CD8-positive, alpha-beta T cell (primary cell): ENCODE measurements at regions of chr6 and their contacts with region 1.

Region 1: DNA sequence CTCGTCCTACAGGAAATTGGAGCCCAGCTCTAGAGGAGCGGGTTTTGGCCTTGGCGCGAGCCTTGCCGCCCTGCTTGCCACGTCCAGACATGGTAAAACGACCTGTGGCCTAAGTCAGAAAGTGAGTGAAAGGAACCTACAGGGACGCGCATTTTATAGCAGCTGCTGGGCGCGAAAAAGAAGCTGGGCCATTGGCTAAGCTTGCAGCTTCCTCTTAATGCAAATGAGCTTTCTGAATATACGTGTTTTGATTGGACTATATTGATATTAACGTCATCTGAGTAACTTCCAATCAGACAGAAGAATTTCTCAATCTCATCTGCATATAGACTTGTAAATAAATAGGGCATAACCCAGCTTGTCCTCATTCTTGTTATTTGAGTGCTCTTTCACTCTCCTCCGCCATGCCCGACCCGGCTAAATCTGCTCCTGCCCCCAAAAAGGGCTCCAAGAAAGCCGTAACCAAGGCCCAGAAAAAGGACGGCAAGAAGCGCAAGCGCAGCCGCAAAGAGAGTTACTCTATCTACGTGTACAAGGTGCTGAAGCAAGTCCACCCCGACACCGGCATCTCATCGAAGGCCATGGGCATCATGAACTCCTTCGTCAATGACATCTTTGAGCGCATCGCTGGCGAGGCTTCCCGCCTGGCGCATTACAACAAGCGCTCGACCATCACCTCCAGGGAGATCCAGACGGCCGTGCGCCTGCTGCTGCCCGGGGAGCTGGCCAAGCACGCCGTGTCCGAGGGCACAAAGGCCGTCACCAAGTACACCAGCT is 18.9 kb downstream of the OR2B2 start:
- DNase-seq: peak; percentile 79 to 96 (median 85)
- ATAC-seq: peak; percentile 72
- H3K4me3 ChIP-seq: peak overlapping the region; percentile 66 to 81
- H3K4me3 Mint-ChIP-seq: no peak overlapping the region
- H3K27ac ChIP-seq: peak overlapping the region; percentile 70 to 88
- H3K27ac Mint-ChIP-seq: no peak overlapping the region
- H3K4me1 ChIP-seq: peaks cover 18% of the 10 kb centered on the region
- H3K4me1 Mint-ChIP-seq: peaks cover 29% of the 10 kb centered on the region
- H3K27me3 ChIP-seq: no peaks in the 10 kb centered on the region
- H3K27me3 Mint-ChIP-seq: no peaks in the 10 kb centered on the region
- CTCF ChIP-seq: no peak

Region 2: GRCh38 chr6:26045065-26045927 is 1848.0 kb before region 1 on chr6:
- CTCF ChIA-PET with region 1: no interaction called
- POLR2A ChIA-PET with region 1: interaction called, 6 read pairs
- intact Hi-C with region 1: loop called in 1 of 2 experiments (anchors 5 kb)
- DNase-seq: peak; percentile 54 to 93 (median 79)
- ATAC-seq: peak; percentile 59
- H3K4me3 ChIP-seq: peak overlapping the region; percentile 67 to 76
- H3K4me3 Mint-ChIP-seq: peak overlapping the region; percentile 89
- H3K27ac ChIP-seq: peak overlapping the region; percentile 73 to 81
- H3K27ac Mint-ChIP-seq: peak overlapping the region; percentile 98
- H3K4me1 ChIP-seq: peaks cover 7% of the 10 kb centered on the region
- H3K4me1 Mint-ChIP-seq: peaks cover 14% of the 10 kb centered on the region
- H3K27me3 ChIP-seq: no peaks in the 10 kb centered on the region
- H3K27me3 Mint-ChIP-seq: no peaks in the 10 kb centered on the region
- CTCF ChIP-seq: no peak

Region 3: DNA sequence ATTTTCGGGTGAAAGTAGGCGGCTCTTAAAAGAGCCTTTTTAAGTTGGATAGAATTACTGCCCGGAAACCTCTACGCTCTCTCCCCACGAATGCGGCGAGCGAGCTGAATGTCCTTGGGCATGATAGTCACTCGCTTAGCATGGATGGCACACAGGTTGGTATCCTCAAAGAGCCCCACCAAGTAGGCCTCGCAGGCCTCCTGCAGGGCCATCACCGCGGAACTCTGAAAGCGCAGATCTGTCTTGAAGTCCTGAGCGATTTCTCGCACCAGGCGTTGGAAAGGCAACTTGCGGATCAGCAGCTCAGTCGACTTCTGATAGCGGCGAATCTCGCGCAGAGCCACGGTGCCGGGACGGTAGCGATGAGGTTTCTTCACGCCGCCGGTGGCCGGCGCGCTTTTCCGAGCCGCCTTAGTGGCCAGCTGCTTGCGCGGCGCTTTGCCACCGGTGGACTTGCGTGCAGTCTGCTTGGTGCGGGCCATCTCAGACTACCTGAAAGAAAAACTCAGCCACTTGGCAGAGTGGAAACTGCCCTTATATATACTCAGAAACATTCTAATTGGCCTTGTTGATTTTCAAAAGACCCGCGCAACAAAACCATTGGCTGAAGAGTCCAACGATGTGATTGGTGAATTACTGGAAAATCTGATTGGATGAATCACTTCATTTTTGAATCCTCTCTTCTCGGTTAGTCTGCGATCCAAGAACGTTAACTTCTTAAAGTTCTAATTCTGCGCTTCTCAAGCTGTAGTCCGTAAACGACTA is 1622.2 kb before region 1 on chr6:
- CTCF ChIA-PET with region 1: no interaction called
- POLR2A ChIA-PET with region 1: interaction called, 3 read pairs
- intact Hi-C with region 1: loop called in 1 of 2 experiments (anchors 5 kb)
- DNase-seq: peak; percentile 68 to 91 (median 80)
- ATAC-seq: peak; percentile 22
- H3K4me3 ChIP-seq: peak overlapping the region; percentile 65 to 67
- H3K4me3 Mint-ChIP-seq: no peak overlapping the region
- H3K27ac ChIP-seq: peak overlapping the region; percentile 73 to 92
- H3K27ac Mint-ChIP-seq: peak overlapping the region; percentile 73
- H3K4me1 ChIP-seq: peaks cover 22% of the 10 kb centered on the region
- H3K4me1 Mint-ChIP-seq: peaks cover 13% of the 10 kb centered on the region
- H3K27me3 ChIP-seq: no peaks in the 10 kb centered on the region
- H3K27me3 Mint-ChIP-seq: no peaks in the 10 kb centered on the region
- CTCF ChIP-seq: no peak

Region 4: DNA sequence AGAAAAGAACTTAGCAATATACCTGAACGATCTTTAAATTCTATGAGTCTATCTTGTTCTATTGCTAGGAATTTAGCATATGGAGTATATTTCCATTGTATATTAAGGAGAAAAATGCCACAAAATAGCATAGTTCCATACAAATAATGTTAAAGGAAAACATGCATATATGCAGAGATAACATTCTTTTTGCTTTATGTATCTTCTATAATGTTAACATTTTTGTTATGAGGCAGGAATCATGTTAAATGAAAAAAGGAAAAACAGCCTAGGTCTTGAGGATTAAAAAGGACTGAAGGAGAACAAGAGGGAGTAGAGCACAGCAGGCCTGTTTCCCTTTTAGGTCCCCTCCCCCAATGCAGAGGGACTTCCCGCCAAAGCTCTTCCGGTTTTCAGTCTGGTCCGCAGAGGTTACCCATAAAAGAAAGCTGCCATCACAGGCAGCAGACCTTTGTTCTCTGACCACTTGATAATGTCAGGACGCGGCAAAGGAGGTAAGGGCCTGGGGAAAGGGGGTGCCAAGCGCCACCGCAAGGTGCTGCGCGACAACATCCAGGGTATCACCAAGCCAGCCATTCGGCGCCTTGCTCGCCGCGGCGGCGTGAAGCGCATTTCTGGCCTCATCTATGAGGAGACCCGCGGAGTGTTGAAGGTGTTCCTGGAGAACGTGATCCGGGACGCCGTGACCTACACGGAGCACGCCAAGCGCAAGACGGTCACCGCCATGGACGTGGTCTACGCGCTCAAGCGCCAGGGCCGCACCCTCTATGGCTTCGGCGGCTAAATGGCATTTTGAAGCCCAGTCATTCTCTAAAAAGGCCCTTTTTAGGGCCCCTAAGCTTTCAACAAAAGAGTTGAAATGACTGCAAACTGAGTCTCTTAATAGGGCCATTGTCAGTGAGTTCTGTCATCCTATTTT is 754.2 kb before region 1 on chr6:
- CTCF ChIA-PET with region 1: interaction called, 4 read pairs
- POLR2A ChIA-PET with region 1: interaction called, 65 read pairs
- intact Hi-C with region 1: no loop called
- DNase-seq: peak in 8 of 9 experiments; percentile 38 to 91 (median 60)
- ATAC-seq: peak; percentile 77
- H3K4me3 ChIP-seq: peak overlapping the region; percentile 77 to 85
- H3K4me3 Mint-ChIP-seq: peak overlapping the region; percentile 96
- H3K27ac ChIP-seq: peak overlapping the region; percentile 82 to 93
- H3K27ac Mint-ChIP-seq: peak overlapping the region; percentile 99
- H3K4me1 ChIP-seq: peaks cover 33% of the 10 kb centered on the region
- H3K4me1 Mint-ChIP-seq: peaks cover 50% of the 10 kb centered on the region
- H3K27me3 ChIP-seq: no peaks in the 10 kb centered on the region
- H3K27me3 Mint-ChIP-seq: no peaks in the 10 kb centered on the region
- CTCF ChIP-seq: no peak

Region 5: GRCh38 chr6:27312146-27312949 is 580.9 kb before region 1 on chr6 and contains the start of gene POM121L2:
- CTCF ChIA-PET with region 1: interaction called, 13 read pairs
- POLR2A ChIA-PET with region 1: no interaction called
- intact Hi-C with region 1: loop called (anchors 5 kb)
- DNase-seq: peak; percentile 28 to 79 (median 52)
- ATAC-seq: peak; percentile 65
- H3K4me3 ChIP-seq: peak within 1 kb of the TSS; percentile 71 to 80
- H3K4me3 Mint-ChIP-seq: peak within 1 kb of the TSS; percentile 81
- H3K27ac ChIP-seq: no peak within 1 kb of the TSS
- H3K27ac Mint-ChIP-seq: no peak within 1 kb of the TSS
- H3K4me1 ChIP-seq: peaks cover 12% of the 10 kb centered on the region
- H3K4me1 Mint-ChIP-seq: peaks cover 10% of the 10 kb centered on the region
- H3K27me3 ChIP-seq: peaks cover 10 to 12% of the 10 kb centered on the region in 2 experiments
- H3K27me3 Mint-ChIP-seq: peaks cover 72% of the 10 kb centered on the region
- CTCF ChIP-seq: peak; percentile 79
- total RNA-seq, gene POM121L2: not detected

Region 6: DNA sequence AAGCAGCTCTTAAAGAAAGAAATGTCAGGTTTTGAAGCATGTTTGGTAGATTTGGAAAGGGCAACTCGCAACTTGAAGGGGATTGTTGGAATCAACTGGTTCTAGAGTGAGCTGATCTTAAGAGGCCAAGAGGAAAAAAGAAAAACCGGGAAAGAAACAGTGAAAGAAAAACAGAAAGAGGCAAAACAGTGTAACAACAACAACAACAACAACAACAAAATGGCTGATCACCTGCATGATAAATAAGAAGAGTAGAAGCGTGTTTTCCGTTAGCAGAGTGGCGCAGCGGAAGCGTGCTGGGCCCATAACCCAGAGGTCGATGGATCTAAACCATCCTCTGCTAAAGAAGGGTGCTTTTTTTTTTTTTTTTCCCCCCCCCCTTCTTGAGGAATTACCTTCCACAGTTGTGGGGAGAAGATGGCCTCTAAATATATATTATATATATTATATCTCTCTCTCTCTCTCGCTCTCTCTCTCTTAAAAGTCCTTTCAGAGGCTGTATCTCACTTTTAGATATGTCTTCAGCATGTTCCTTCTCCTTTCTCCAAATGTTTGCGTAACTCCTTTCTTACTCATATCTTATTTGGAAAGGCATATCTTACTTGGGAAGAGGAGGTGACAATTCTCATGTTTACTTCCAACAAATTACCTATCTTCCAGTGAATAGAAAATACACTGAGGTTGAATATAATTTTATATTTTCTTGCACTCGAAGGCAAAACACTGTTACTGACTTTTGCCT is 115.5 kb before region 1 on chr6:
- CTCF ChIA-PET with region 1: interaction called, 176 read pairs
- POLR2A ChIA-PET with region 1: interaction called, 55 read pairs
- intact Hi-C with region 1: loop called (anchors 1 kb)
- DNase-seq: no peak
- ATAC-seq: no peak
- H3K4me3 ChIP-seq: no peak overlapping the region
- H3K4me3 Mint-ChIP-seq: no peak overlapping the region
- H3K27ac ChIP-seq: no peak overlapping the region
- H3K27ac Mint-ChIP-seq: no peak overlapping the region
- H3K4me1 ChIP-seq: peaks cover 1% of the 10 kb centered on the region
- H3K4me1 Mint-ChIP-seq: peaks cover 2% of the 10 kb centered on the region
- H3K27me3 ChIP-seq: no peaks in the 10 kb centered on the region
- H3K27me3 Mint-ChIP-seq: peaks cover 11% of the 10 kb centered on the region
- CTCF ChIP-seq: no peak

Region 7: DNA sequence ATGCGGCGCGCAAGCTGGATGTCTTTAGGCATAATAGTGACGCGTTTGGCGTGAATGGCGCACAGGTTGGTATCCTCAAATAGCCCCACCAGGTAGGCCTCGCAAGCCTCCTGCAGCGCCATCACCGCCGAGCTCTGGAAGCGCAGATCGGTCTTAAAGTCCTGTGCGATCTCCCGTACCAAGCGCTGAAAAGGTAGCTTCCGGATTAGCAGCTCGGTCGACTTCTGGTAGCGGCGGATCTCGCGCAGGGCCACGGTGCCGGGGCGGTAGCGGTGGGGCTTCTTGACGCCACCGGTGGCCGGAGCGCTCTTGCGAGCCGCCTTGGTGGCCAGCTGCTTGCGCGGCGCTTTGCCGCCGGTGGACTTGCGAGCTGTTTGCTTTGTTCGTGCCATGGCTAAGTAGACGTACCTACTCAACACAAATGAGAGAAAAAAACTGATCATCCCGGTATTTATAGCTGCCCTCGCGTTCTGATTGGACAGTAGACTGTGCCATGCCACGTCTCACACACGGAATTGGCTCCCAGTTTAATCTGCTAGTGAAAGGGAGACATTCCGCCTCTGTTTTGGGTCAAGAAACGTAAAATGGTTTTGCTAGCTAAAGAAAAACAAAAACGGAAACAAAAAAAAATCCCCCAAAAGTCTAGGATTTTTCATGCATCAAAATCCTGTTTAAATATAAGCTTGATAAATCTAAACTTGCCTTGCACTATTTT is 21.2 kb before region 1 on chr6:
- CTCF ChIA-PET with region 1: interaction called, 159 read pairs
- POLR2A ChIA-PET with region 1: interaction called, 448 read pairs
- intact Hi-C with region 1: loop called (anchors 1 kb)
- DNase-seq: peak; percentile 72 to 97 (median 85)
- ATAC-seq: peak; percentile 75
- H3K4me3 ChIP-seq: peak overlapping the region; percentile 54 to 67
- H3K4me3 Mint-ChIP-seq: peak overlapping the region; percentile 82
- H3K27ac ChIP-seq: peak overlapping the region; percentile 81 to 86
- H3K27ac Mint-ChIP-seq: peak overlapping the region; percentile 98
- H3K4me1 ChIP-seq: peaks cover 20% of the 10 kb centered on the region
- H3K4me1 Mint-ChIP-seq: peaks cover 36% of the 10 kb centered on the region
- H3K27me3 ChIP-seq: peaks cover 0 to 3% of the 10 kb centered on the region in 2 experiments
- H3K27me3 Mint-ChIP-seq: no peaks in the 10 kb centered on the region
- CTCF ChIP-seq: peak; percentile 48

Region 8: DNA sequence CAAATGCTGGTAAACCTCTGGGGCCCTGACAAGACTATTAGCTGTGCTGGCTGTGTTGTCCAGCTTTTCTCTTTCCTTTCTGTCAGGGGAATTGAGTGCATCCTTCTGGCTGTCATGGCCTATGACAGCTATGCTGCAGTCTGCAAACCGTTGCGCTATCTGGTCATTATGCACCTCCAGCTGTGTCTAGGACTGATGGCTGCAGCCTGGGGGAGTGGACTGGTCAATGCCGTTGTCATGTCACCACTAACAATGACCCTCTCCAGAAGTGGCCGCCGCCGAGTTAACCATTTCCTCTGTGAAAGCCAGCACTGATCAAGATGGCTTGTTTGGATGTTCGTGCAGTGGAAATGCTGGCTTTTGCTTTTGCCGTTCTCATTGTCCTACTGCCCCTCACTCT is 84.1 kb after region 1 on chr6:
- CTCF ChIA-PET with region 1: no interaction called
- POLR2A ChIA-PET with region 1: no interaction called
- intact Hi-C with region 1: no loop called
- DNase-seq: no peak
- ATAC-seq: no peak
- H3K4me3 ChIP-seq: no peak overlapping the region
- H3K4me3 Mint-ChIP-seq: no peak overlapping the region
- H3K27ac ChIP-seq: no peak overlapping the region
- H3K27ac Mint-ChIP-seq: no peak overlapping the region
- H3K4me1 ChIP-seq: no peaks in the 10 kb centered on the region
- H3K4me1 Mint-ChIP-seq: no peaks in the 10 kb centered on the region
- H3K27me3 ChIP-seq: no peaks in the 10 kb centered on the region
- H3K27me3 Mint-ChIP-seq: peaks cover 27% of the 10 kb centered on the region
- CTCF ChIP-seq: no peak